ENCODE measurements at regions of chr2 and their contacts with region 1.

Region 1: GRCh38 chr2:54723131-54723995 is at the start of gene EML6:
- DNase-seq: peak; percentile 99
- H3K4me3 Mint-ChIP-seq: peak within 1 kb of the TSS; percentile 90
- H3K27ac Mint-ChIP-seq: no peak within 1 kb of the TSS
- H3K4me1 Mint-ChIP-seq: peaks cover 13% of the 10 kb centered on the region
- H3K27me3 Mint-ChIP-seq: peaks cover 32% of the 10 kb centered on the region
- total RNA-seq, gene EML6: 0.38 to 0.49 TPM

Region 2: GRCh38 chr2:53786705-53787612 is 936.4 kb before region 1 on chr2 and contains the starts of genes ASB3 and ERLEC1:
- CTCF ChIA-PET with region 1: no interaction called
- intact Hi-C with region 1: loop called (anchors 2 kb)
- DNase-seq: peak; percentile 90
- H3K4me3 Mint-ChIP-seq: peak within 1 kb of the TSS; percentile 95
- H3K27ac Mint-ChIP-seq: peak within 1 kb of the TSS; percentile 89
- H3K4me1 Mint-ChIP-seq: peaks cover 50% of the 10 kb centered on the region
- H3K27me3 Mint-ChIP-seq: no peaks in the 10 kb centered on the region
- total RNA-seq, gene ASB3: 17.2 to 19.1 TPM
- total RNA-seq, gene ERLEC1: 16.7 to 18.5 TPM

Region 3: GRCh38 chr2:54341656-54342055 is 381.7 kb before region 1 on chr2:
- CTCF ChIA-PET with region 1: no interaction called
- intact Hi-C with region 1: no loop called
- DNase-seq: no peak
- H3K4me3 Mint-ChIP-seq: no peak overlapping the region
- H3K27ac Mint-ChIP-seq: no peak overlapping the region
- H3K4me1 Mint-ChIP-seq: no peaks in the 10 kb centered on the region
- H3K27me3 Mint-ChIP-seq: no peaks in the 10 kb centered on the region

Region 4: GRCh38 chr2:54455563-54456361 is 267.6 kb before region 1 on chr2 and contains the start of gene SPTBN1:
- CTCF ChIA-PET with region 1: no interaction called
- intact Hi-C with region 1: loop called (anchors 1 kb)
- DNase-seq: peak; percentile 34
- H3K4me3 Mint-ChIP-seq: peak within 1 kb of the TSS; percentile 77
- H3K27ac Mint-ChIP-seq: no peak within 1 kb of the TSS
- H3K4me1 Mint-ChIP-seq: peaks cover 13% of the 10 kb centered on the region
- H3K27me3 Mint-ChIP-seq: peaks cover 38% of the 10 kb centered on the region
- total RNA-seq, gene SPTBN1: 103 to 107 TPM

Region 5: GRCh38 chr2:54680397-54681041 is 42.8 kb before region 1 on chr2:
- CTCF ChIA-PET with region 1: no interaction called
- intact Hi-C with region 1: loop called (anchors 1 kb)
- DNase-seq: peak; percentile 68
- H3K4me3 Mint-ChIP-seq: no peak overlapping the region
- H3K27ac Mint-ChIP-seq: peak overlapping the region; percentile 11
- H3K4me1 Mint-ChIP-seq: peaks cover 18% of the 10 kb centered on the region
- H3K27me3 Mint-ChIP-seq: peaks cover 37% of the 10 kb centered on the region

Region 6: DNA sequence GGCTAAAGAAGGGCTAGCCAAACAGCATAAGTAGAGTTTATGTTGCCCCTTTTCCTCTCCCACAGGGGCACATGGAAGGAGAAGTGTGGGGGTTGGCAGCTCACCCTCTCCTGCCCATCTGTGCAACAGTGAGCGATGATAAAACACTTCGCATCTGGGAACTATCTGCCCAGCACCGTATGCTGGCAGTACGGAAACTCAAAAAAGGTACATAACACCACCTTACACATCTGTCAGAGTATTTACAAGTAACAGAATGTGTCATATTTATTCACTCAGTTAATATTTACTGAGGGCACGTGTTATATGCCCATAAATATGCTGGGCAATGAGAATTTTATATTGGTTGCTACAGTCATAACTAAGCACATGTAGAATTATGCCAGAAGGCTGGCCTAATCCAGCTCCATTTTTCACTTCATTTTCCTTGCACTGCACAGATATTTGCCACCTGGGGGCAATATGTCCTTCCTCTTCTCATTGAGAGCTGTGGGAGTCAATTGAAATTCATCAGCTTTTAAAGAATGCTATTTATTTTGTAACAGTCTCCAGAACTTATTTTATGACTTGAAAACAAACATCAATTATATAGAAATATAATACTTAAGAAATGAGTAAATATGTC is 176.3 kb after region 1 on chr2:
- CTCF ChIA-PET with region 1: interaction called, 3 read pairs
- intact Hi-C with region 1: loop called (anchors 5 kb)
- DNase-seq: no peak
- H3K4me3 Mint-ChIP-seq: no peak overlapping the region
- H3K27ac Mint-ChIP-seq: no peak overlapping the region
- H3K4me1 Mint-ChIP-seq: peaks cover 27% of the 10 kb centered on the region
- H3K27me3 Mint-ChIP-seq: no peaks in the 10 kb centered on the region

Region 7: DNA sequence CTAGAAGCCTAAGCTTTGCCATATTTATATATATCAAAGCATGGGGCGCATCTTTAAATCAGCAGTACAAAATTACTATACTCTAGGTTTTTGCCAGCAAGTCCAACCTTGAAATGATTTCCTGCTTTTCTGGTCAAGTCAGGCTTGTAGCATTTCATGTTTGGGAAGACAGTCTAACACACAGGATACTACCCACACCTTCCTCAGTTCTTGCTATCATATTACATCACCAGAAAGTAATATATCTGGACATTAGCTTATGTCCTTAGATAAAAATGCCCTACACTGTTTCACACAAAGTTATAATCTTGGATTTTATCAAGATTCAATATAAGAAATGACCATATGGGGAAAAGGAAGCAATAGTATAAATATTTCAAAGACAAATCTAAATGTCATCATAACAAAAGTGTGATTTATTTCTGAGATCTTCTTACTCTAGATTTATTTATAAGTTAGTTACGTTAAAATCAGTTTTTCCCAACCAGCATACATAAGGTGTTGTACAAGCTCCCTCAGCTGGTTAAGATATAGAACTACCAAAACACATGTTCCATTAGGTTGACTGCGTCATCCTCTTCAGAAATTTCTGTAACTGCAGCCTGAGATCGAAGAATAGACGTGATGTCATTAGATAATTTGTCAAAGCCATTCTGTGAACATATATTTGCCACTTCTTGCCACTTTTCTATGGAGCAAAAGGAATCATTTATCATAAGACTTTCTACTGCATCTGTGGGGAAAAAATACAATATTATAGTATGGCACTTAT is 452.1 kb after region 1 on chr2:
- CTCF ChIA-PET with region 1: no interaction called
- intact Hi-C with region 1: loop called (anchors 5 kb)
- DNase-seq: no peak
- H3K4me3 Mint-ChIP-seq: no peak overlapping the region
- H3K27ac Mint-ChIP-seq: no peak overlapping the region
- H3K4me1 Mint-ChIP-seq: peaks cover 7% of the 10 kb centered on the region
- H3K27me3 Mint-ChIP-seq: no peaks in the 10 kb centered on the region

Region 8: GRCh38 chr2:55617175-55618024 is 894.0 kb after region 1 on chr2 and contains the start of gene PPP4R3B:
- CTCF ChIA-PET with region 1: no interaction called
- intact Hi-C with region 1: loop called (anchors 1 kb)
- DNase-seq: peak; percentile 99
- H3K4me3 Mint-ChIP-seq: no peak within 1 kb of the TSS
- H3K27ac Mint-ChIP-seq: no peak within 1 kb of the TSS
- H3K4me1 Mint-ChIP-seq: peaks cover 21% of the 10 kb centered on the region
- H3K27me3 Mint-ChIP-seq: no peaks in the 10 kb centered on the region
- total RNA-seq, gene PPP4R3B: 55.4 to 57.2 TPM

Measured in activated naive CD4-positive, alpha-beta T cell treated with anti-CD3 and anti-CD28 coated beads for 36 hours (primary cell).